ENCODE measurements at regions of chr10 and their contacts with region 1.

Region 1: GRCh38 chr10:79468024-79468560 is 22.7 kb upstream of the ZCCHC24 start:
- DNase-seq: no peak
- H3K4me3 ChIP-seq: no peak overlapping the region
- H3K27ac ChIP-seq: peak overlapping the region in 3 of 4 donors; percentile 21 to 46 (median 44)
- H3K4me1 ChIP-seq: peaks cover 0 to 33% (median 4%) of the 10 kb centered on the region in 3 donors
- H3K27me3 ChIP-seq: no peaks in the 10 kb centered on the region
- CTCF ChIP-seq: no peak
- POLR2A ChIP-seq: no peak

Region 2: DNA sequence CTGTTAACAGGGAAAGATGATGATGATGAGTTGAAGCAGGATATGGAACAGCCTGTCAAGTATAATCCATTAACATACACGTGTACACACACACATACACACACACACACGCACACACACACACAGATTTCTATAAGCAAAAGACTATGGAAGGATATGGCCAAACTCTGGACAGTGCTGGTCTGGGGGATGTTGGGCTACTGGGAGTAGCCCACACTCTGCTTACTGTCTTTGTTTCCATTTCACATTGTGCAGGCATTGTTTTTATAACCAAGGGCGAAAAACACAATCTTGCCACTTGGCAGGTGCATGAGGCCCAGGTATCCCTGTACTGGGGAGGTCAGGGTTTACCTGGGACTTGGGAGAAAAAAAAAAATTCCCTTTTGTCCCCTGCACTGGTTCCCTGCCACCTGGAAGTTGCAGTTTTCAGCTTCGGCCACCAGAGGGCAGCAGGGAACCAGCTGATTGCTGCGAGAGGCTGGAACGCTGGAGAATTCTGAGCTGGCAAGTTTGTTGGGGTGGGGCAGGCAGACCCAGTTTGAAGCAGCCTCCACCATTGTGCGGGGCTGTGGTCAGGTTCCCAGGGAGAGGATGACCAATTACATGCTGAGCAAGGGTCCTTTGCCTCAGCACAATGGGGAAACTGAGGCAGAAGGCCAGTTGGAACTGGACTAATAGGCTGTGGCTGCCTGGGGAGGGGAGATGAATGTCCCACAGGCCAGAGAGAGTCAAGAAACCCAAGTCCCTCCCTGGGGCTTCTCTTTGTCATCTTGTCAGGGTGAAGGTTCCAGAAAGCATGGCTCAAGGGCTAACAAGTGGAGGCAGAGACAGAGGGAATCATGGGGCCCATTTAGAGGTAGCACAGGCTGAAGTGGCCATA is 93.5 kb before region 1 on chr10:
- intact Hi-C with region 1: loop called (anchors 5 kb)
- DNase-seq: no peak
- H3K4me3 ChIP-seq: no peak overlapping the region
- H3K27ac ChIP-seq: no peak overlapping the region
- H3K4me1 ChIP-seq: peaks cover 3 to 21% (median 12%) of the 10 kb centered on the region in 3 donors
- H3K27me3 ChIP-seq: no peaks in the 10 kb centered on the region
- CTCF ChIP-seq: peak; percentile 91 to 100 (median 97)
- POLR2A ChIP-seq: no peak